OCI-LY7 (cell line): ENCODE measurements at regions of chr1 and their contacts with region 1.

Region 1: DNA sequence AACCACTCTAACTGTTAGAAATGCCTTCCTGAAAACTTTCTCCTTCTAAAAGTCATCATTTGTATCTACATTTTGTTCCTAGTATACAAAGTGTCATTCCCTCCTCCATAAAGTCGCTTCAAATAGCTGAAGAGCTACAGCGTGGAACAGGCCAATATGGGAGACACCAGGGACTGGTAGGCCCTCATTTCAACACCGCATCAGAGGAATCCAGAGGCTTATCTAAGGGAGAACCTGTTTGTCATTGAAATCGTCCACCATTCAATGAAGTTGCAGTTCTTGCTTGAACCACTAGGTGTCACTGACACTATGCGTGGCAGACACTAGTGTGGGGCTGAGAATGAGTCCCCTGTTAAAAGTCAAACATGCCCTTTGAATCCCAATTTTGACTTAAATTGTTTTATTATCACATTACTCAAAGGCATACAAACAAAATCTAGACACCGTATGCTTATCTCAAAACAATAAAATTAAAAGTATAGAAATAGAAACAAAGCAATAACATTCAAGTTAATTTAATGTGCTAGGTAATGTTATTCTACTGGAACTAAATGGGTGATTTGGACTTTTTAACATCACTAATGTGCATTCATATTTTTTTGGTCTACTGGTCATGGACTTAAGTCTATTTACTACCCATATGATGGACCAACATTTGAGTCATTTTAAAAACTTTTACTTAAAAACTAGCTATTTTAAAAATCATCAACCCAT is 182.3 kb downstream of the FCRL5 start:
- DNase-seq: peak; percentile 71
- H3K4me3 ChIP-seq: no peak overlapping the region
- H3K27ac ChIP-seq: no peak overlapping the region
- H3K4me1 ChIP-seq: no peaks in the 10 kb centered on the region
- CTCF ChIP-seq: peak; percentile 93

Region 2: GRCh38 chr1:157156058-157156541 is 213.9 kb before region 1 on chr1:
- CTCF ChIA-PET with region 1: no interaction called
- POLR2A ChIA-PET with region 1: no interaction called
- intact Hi-C with region 1: no loop called
- DNase-seq: peak; percentile 76
- H3K4me3 ChIP-seq: no peak overlapping the region
- H3K27ac ChIP-seq: no peak overlapping the region
- H3K4me1 ChIP-seq: no peaks in the 10 kb centered on the region
- CTCF ChIP-seq: peak; percentile 91

Region 3: DNA sequence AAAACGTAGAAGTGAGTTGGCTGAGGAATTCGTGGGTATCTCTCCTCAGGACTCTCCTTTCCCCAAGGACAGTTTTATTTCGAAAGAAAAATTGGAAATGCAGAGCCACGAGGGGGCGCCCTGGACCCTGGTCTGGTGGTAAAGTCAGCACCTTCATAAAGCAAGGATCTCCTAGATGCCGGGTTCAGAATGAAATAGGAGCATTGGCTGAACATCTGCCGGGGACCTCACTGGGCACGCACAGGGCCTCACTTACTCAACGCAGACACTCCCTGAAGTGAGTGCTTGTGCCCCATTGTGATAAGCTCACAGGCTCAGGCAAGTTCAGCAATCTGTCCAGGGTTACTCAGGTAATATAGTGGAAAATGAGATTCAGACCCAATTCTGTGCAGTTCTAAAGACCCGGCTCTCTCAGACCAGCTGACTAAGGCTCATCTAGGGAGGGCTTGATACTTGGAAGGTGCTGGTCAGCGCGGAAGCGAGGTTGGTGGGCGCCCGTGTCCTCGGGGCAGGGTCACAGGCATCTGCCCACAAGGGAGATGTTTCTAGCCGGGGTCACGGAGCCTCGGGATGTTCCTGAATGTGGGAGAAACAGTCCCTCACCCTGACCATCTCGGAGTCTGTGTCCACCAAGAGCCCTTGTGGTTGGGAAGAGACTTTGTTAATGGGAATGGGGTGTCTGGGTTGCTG is 176.1 kb before region 1 on chr1:
- CTCF ChIA-PET with region 1: no interaction called
- POLR2A ChIA-PET with region 1: no interaction called
- intact Hi-C with region 1: loop called (anchors 10 kb)
- DNase-seq: peak; percentile 62
- H3K4me3 ChIP-seq: no peak overlapping the region
- H3K27ac ChIP-seq: no peak overlapping the region
- H3K4me1 ChIP-seq: no peaks in the 10 kb centered on the region
- CTCF ChIP-seq: peak; percentile 97

Region 4: DNA sequence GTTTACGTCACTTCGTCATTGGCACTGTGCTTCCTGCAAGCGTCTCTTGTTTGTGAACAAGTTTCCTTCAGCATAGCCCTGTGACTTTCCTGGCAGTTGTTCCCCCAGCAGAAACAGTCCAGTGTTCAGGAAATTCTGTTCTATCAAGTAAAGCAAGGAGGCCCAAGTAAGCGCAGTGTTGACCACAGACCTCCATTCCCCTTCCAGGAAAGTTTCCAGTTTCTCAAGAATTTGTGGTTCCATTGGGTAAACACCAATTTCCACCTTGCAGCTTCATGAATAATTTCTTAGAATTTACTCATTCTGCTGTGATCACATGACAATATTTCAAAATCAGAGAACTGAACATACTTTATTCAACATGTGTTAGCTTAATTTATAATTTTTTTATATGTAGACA is 143.2 kb before region 1 on chr1:
- CTCF ChIA-PET with region 1: no interaction called
- POLR2A ChIA-PET with region 1: no interaction called
- intact Hi-C with region 1: no loop called
- DNase-seq: no peak
- H3K4me3 ChIP-seq: no peak overlapping the region
- H3K27ac ChIP-seq: no peak overlapping the region
- H3K4me1 ChIP-seq: no peaks in the 10 kb centered on the region
- CTCF ChIP-seq: no peak

Region 5: GRCh38 chr1:157460381-157460780 is 90.4 kb after region 1 on chr1:
- CTCF ChIA-PET with region 1: no interaction called
- POLR2A ChIA-PET with region 1: no interaction called
- intact Hi-C with region 1: no loop called
- DNase-seq: no peak
- H3K4me3 ChIP-seq: no peak overlapping the region
- H3K27ac ChIP-seq: no peak overlapping the region
- H3K4me1 ChIP-seq: no peaks in the 10 kb centered on the region
- CTCF ChIP-seq: no peak

Region 6: DNA sequence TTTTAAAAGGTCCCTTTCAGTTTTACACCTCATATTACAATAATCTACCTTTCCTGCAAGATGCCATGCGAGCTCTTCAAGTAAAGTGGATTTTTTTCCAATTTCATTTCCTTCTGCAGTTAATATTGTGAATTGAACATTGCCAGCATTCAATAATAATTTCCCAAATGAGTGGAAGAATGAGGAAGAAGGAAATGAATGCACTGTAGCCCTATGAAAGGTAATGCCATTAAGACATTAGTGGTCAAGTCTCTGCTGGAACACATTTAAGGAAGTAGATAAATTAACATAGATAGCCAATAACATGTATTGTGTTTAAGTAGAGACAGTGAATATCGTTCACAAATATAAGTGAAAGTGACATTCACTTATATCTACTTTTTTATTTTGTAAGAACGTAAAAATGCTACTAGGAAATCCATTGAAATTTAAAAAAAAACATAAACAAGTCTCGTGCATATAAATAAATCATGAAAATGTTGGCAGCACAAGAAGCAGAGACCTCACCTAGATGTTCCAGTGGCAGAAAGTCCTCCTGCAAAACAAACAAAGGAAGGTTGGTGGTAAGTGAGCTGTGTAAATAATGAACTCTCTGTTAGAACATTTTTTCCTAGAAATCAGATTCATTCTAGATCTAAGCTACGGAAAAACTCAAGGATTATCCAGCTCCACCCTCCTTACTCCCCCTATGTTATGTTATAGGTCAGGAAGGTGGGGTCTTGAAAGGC is 312.9 kb after region 1 on chr1:
- CTCF ChIA-PET with region 1: no interaction called
- POLR2A ChIA-PET with region 1: no interaction called
- intact Hi-C with region 1: loop called (anchors 10 kb)
- DNase-seq: no peak
- H3K4me3 ChIP-seq: no peak overlapping the region
- H3K27ac ChIP-seq: no peak overlapping the region
- H3K4me1 ChIP-seq: no peaks in the 10 kb centered on the region
- CTCF ChIP-seq: no peak